Esophagus muscularis mucosa (tissue), 4 donors: ENCODE measurements at regions of chr3 and their contacts with region 1.

Region 1: GRCh38 chr3:136042608-136043221 is 77.2 kb downstream of the PPP2R3A start:
- DNase-seq: no peak
- H3K4me3 ChIP-seq: no peak overlapping the region
- H3K27ac ChIP-seq: no peak overlapping the region
- H3K4me1 ChIP-seq: peaks cover 0 to 12% (median 2%) of the 10 kb centered on the region in 4 donors
- H3K27me3 ChIP-seq: no peaks in the 10 kb centered on the region
- CTCF ChIP-seq: peak; percentile 55 to 66 (median 62)
- EP300 ChIP-seq: no peak
- POLR2A ChIP-seq: no peak

Region 2: DNA sequence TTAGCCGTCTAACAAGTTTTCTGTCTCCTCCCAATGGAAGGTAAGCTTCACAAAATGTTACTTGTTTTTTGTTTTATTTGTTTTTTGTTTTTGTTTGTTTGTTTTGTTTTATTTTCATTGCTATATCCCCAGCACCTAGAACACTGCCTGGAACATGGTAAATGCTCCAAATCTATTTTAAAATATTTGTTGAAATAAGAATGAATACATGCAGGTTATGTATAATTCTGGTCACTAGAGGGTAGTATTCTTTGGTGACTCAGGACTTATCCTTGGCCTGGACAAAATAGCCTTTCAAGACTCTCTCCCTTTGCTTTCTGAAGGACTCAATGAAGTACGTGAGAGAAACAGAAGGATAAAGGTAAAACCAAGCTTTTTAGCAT is 124.1 kb before region 1 on chr3:
- intact Hi-C with region 1: loop called (anchors 2 kb)
- DNase-seq: no peak
- H3K4me3 ChIP-seq: no peak overlapping the region
- H3K27ac ChIP-seq: no peak overlapping the region
- H3K4me1 ChIP-seq: peaks cover 0 to 4% (median 0%) of the 10 kb centered on the region in 4 donors
- H3K27me3 ChIP-seq: no peaks in the 10 kb centered on the region
- CTCF ChIP-seq: peak; percentile 55 to 64 (median 57)
- EP300 ChIP-seq: no peak
- POLR2A ChIP-seq: no peak

Region 3: GRCh38 chr3:136209921-136210320 is 167.2 kb after region 1 on chr3:
- intact Hi-C with region 1: no loop called
- DNase-seq: no peak
- H3K4me3 ChIP-seq: no peak overlapping the region
- H3K27ac ChIP-seq: no peak overlapping the region
- H3K4me1 ChIP-seq: no peaks in the 10 kb centered on the region
- H3K27me3 ChIP-seq: no peaks in the 10 kb centered on the region
- CTCF ChIP-seq: no peak
- EP300 ChIP-seq: no peak
- POLR2A ChIP-seq: no peak

Region 4: GRCh38 chr3:136283627-136284026 is 240.9 kb after region 1 on chr3:
- intact Hi-C with region 1: no loop called
- DNase-seq: no peak
- H3K4me3 ChIP-seq: no peak overlapping the region
- H3K27ac ChIP-seq: no peak overlapping the region
- H3K4me1 ChIP-seq: peaks cover 0 to 19% (median 7%) of the 10 kb centered on the region in 4 donors
- H3K27me3 ChIP-seq: no peaks in the 10 kb centered on the region
- CTCF ChIP-seq: no peak
- EP300 ChIP-seq: no peak
- POLR2A ChIP-seq: no peak